Left cardiac atrium (tissue), 4 donors: ENCODE measurements at regions of chr5 and their contacts with region 1.

Region 1: GRCh38 chr5:56838409-56839039 is 23.2 kb downstream of the MAP3K1 start:
- DNase-seq: no peak
- ATAC-seq: peak; percentile 61 to 64

Region 2: DNA sequence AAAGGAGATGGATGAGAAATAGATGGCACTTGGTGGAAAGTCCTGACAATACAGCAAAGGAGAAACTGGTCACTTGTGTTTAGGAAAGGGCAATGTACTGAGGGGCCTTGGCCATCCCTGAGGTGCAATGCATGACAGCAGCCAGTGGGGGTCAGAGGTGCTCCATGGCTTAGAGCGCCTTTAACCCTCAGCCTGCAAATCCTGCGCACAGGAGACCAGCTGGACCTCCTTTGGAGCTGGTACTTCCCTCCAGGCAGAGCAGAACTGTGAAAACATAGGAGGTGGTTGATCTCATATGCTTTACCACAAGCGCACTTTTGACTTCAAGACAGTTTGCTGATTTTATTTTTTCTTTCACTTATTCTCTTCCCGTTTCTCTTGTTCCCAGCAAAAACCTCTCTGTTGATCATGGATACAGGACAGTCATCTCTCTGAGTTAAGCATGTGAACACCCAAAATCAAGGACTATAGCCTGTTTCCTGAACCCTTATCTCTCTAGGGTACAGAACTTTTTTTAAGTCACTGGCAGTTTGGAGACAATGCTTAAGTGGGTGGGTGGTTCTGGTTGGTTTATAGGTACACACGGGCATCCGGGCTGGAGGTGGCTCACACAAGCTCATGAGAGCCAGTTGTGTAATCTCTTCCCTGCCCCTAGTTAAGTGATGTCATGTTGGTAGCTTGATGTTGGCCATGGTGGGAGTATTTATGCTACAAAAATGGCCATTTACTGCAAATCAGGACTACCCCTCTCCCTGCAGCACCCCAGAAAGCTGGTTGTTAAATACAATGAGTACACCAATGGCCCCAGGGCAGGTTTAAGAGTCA is 567.7 kb before region 1 on chr5:
- intact Hi-C with region 1: loop called (anchors 1 to 5 kb)
- DNase-seq: peak; percentile 84
- ATAC-seq: peak; percentile 98 to 99